Esophagus muscularis mucosa (tissue), 4 donors: ENCODE measurements at regions of chr1 and their contacts with region 1.

Region 1: DNA sequence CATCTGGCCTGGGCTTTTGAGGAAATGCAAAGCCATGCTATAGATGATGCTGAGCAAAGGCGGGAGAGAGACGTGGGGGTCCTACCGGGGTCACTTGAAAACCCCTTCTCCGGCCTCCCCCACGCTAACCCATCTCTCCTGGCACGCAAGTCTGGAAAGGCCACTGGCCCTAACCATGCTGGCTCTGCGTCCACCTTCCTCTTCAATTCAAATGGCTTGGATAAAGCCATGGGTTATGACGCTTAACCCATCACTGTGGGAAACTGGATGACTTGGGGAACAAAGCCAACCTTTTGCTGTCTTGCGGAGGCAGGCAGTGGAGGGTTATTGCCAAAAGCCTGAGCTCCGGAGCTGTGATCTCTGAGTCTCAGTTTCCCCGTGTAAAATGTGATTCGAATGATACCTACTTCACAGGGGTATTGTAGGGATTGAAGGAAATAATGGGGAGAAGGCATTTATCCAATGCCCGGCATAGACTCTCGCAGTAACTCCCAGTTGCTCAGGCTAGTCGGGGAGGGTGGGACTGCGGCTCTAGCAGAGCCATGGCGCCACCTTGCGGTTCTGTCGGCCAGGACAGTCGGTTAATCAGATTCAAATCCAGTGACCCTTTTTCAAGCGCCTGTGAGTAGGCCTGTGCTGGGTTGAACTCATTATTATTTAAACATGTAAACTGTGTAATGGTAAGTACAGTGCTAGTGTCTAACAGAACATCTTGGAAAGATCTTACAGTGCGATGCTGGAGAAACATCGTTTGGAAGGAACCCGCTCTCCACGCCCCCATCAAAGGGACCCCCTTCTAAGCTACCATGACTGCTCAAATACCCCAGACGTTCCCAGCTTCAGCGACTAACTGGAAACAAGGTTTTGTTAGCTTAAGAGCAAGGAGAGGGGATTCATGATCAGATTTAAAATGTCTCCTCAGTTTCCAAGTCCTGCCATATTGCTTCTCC is 20.3 kb downstream of the NEK2 start:
- DNase-seq: no peak
- H3K4me3 ChIP-seq: peak overlapping the region in 2 of 4 donors; percentile 16 to 32
- H3K27ac ChIP-seq: no peak overlapping the region
- H3K4me1 ChIP-seq: peaks cover 0 to 7% (median 6%) of the 10 kb centered on the region in 4 donors
- H3K27me3 ChIP-seq: no peaks in the 10 kb centered on the region
- CTCF ChIP-seq: peak; percentile 89 to 91 (median 91)
- EP300 ChIP-seq: no peak
- POLR2A ChIP-seq: no peak

Region 2: DNA sequence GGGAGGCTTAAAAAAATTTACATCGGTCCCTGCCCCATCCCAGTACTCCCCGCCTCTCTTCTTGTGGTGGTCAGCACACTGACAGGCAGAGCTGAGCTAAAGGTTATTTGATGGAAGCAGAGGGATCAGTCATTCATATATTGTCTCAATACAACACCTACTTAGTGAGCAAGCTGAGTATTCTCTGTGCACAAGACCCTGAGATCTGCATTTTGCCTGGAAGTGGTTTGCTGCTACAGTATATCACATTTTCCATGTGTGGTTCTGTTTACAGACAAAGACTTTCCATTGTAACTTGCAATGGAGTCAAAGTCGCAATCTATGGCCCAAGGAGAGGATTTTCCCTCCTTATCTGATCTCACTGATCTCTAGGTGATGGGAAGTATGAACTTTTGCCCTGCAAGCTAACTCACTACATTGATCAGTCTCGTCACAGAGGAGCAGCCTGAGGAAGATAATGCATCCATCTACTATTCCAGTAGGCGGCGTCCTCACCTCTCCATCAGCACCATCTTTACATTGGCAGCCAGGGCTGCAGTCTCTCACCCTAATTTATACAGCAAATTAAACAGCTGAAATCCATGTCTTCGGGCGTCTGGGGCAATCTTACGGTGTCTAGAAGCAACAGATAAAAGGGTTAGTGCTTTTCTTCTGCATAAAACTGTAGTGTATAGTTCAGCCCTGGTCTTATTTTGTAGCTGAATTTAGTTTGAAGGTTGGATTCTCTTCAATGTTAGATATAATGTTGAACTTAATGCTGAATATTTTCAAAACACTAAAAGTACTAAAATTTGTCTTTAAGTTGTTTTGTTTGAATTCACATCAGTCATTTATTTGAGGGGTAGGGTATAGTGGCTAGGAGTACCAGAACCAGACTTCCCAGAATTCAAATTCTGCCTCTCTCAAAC is 331.7 kb before region 1 on chr1:
- intact Hi-C with region 1: loop called (anchors 10 kb)
- DNase-seq: no peak
- H3K4me3 ChIP-seq: no peak overlapping the region
- H3K27ac ChIP-seq: no peak overlapping the region
- H3K4me1 ChIP-seq: peaks cover 12 to 23% (median 19%) of the 10 kb centered on the region in 4 donors
- H3K27me3 ChIP-seq: no peaks in the 10 kb centered on the region
- CTCF ChIP-seq: peak; percentile 68 to 84 (median 74)
- EP300 ChIP-seq: no peak
- POLR2A ChIP-seq: no peak

Region 3: DNA sequence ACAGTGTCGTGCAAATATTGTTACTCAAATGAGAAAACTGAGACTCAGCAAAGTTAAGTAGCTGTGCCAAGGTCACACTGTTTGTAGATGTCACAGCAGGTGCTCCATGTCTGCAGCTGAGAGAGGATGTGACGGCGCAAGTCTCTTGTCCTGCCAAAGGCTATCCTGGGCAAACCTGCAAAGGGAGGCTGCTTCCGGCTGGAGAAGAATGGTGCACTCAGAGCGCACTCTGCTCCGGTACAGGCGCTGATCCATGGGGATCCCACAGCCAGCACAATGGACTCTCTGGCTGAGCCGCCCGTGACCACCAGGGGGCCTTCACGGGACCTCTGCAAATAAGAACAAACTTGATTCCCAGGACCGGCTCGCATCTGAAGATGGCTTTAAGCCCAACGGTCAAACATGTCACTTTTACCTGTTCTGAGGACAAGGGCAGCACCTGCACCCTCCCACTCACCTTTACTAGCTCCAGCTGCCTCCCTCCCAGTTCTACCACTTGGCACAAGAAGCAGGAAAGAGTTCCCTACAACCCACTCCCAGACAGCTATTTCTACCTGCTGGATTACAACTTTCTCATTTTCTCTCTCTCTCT is 185.1 kb before region 1 on chr1:
- intact Hi-C with region 1: loop called (anchors 5 kb)
- DNase-seq: peak; percentile 96
- H3K4me3 ChIP-seq: no peak overlapping the region
- H3K27ac ChIP-seq: peak overlapping the region in 1 of 4 donors; percentile 4
- H3K4me1 ChIP-seq: peaks cover 8 to 37% (median 33%) of the 10 kb centered on the region in 4 donors
- H3K27me3 ChIP-seq: no peaks in the 10 kb centered on the region
- CTCF ChIP-seq: peak; percentile 75 to 92 (median 82)
- EP300 ChIP-seq: no peak
- POLR2A ChIP-seq: no peak

Region 4: DNA sequence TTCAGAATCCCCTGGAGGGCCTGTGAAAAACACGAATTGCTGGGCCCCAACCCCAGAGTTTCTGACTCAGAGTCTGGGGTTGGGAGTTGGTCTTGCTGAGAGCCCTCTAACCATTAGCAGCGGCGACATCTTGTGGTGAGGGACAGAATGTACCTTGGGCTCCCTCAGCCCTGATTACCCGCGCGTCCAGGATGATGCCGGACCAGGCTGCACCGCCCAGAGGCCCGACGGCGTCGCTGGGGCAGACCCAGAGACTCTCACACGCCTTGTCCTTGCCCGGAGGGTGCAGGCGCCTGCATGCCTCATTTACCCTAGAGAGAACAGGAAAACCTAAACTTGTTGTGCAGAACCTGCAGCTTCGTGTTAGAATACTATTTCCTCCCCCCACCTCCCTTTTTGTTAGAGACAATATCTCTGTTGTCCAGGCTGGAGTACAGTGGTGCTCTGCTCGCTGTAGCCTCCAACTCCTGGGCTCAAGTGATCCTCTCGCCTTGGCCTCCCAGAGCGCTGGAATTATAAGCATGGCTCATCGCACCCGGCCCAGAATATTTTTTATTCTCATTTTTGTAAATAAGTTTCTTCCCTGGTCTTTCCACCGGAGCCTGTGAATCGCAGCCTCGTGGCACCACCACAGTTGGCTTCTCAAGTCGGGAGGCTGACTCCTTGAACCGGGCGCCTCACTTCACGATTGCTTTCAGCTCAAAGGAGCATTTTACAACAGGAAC is 140.9 kb before region 1 on chr1:
- intact Hi-C with region 1: loop called (anchors 2 kb)
- DNase-seq: no peak
- H3K4me3 ChIP-seq: no peak overlapping the region
- H3K27ac ChIP-seq: no peak overlapping the region
- H3K4me1 ChIP-seq: peaks cover 10 to 22% (median 18%) of the 10 kb centered on the region in 4 donors
- H3K27me3 ChIP-seq: no peaks in the 10 kb centered on the region
- CTCF ChIP-seq: peak; percentile 75 to 82 (median 76)
- EP300 ChIP-seq: no peak
- POLR2A ChIP-seq: no peak

Region 5: GRCh38 chr1:211578640-211579433 is 76.3 kb before region 1 on chr1 and contains the start of gene SLC30A1:
- intact Hi-C with region 1: loop called (anchors 2 kb)
- DNase-seq: peak; percentile 100
- H3K4me3 ChIP-seq: peak within 1 kb of the TSS; percentile 75 to 97 (median 94)
- H3K27ac ChIP-seq: peak within 1 kb of the TSS; percentile 95 to 99 (median 98)
- H3K4me1 ChIP-seq: peaks cover 21 to 72% (median 68%) of the 10 kb centered on the region in 4 donors
- H3K27me3 ChIP-seq: no peaks in the 10 kb centered on the region
- CTCF ChIP-seq: no peak
- EP300 ChIP-seq: no peak
- POLR2A ChIP-seq: peak; percentile 82
- total RNA-seq, gene SLC30A1: 7.5 to 10.6 (median 10.2) TPM